SK-N-SH (cell line): ENCODE measurements at regions of chr20 and their contacts with region 1.

Region 1: DNA sequence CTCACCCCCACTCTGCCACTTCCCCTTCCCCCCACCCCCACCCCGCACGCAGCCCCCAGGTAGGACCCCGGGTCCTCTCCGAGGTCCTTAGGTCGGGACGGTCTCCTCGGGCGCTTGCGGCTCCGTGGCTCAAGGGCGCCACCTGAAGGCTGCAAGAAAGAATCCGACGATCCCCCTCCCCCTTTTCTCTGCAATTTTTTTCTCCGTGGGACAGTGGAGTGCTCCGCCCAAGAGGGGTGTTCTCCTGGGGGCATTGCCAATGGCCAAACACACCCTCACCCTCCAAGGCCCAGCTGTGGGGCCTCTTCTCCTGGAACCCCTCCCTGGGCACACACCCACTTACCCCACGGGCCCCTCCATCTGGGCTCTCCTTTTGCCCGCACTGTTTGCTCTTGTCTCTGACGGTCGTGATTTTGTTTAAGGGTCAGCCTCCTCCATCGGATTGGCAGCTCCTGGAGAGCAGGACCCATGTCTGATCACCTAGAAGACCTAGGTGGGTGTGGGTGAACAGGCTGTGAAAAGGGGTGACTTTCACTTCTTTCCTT is 1.1 kb upstream of the TMEM74B start:
- DNase-seq: peak; percentile 88
- H3K4me3 ChIP-seq: peak overlapping the region in 1 of 2 experiments; percentile 50; a peak in 1 of 4 replicates
- H3K27ac ChIP-seq: no peak overlapping the region
- H3K4me1 ChIP-seq: peaks cover 0 to 3% of the 10 kb centered on the region in 2 experiments; a peak in 1 of 4 replicates
- H3K27me3 ChIP-seq: no peaks in the 10 kb centered on the region; the same call in 1 of the 2 replicates
- CTCF ChIP-seq: peak; percentile 66
- EP300 ChIP-seq: no peak
- RAD21 ChIP-seq: peak; percentile 64

Region 2: DNA sequence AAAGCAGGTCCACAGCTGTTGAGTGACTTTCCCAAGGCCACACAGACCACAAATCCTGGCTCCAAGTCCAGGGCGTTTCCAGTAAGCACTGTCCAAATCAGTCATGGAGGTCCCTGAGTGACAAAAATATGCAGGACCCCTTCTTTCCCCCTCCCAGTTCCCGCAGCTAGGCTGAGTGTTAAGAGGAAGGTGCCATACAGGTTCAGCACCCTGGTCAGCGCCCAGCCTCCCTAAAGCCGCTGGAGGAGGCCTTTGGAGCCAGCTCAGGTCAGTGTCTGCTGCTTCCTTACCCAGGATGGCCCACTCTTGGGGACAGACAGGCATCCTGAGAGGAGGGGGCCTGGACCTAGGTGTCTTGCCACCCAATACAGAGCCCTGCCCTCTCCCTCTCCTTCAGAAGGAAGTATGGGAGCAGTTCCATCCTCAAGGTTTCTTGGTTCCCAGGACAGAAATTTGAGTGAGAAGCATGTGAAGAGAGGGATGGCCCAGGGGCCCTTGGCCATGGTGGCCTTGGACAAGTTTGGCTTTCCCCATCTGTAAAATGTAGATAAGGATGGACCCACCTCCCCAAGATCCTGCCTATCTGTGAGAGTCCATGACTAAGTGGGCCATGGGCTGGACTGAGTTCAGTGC is 14.3 kb before region 1 on chr20:
- CTCF ChIA-PET with region 1: interaction called, 20 read pairs
- POLR2A ChIA-PET with region 1: interaction called, 3 read pairs
- DNase-seq: no peak
- H3K4me3 ChIP-seq: no peak overlapping the region
- H3K27ac ChIP-seq: no peak overlapping the region
- H3K4me1 ChIP-seq: no peaks in the 10 kb centered on the region; a peak in 1 of 4 replicates
- H3K27me3 ChIP-seq: no peaks in the 10 kb centered on the region
- CTCF ChIP-seq: no peak
- EP300 ChIP-seq: no peak
- RAD21 ChIP-seq: no peak

Region 3: GRCh38 chr20:1204113-1204512 is 18.3 kb after region 1 on chr20:
- CTCF ChIA-PET with region 1: interaction called, 11 read pairs
- POLR2A ChIA-PET with region 1: no interaction called
- DNase-seq: no peak
- H3K4me3 ChIP-seq: no peak overlapping the region
- H3K27ac ChIP-seq: no peak overlapping the region
- H3K4me1 ChIP-seq: no peaks in the 10 kb centered on the region
- H3K27me3 ChIP-seq: no peaks in the 10 kb centered on the region; the same call in 1 of the 2 replicates
- CTCF ChIP-seq: no peak
- EP300 ChIP-seq: no peak
- RAD21 ChIP-seq: no peak

Region 4: GRCh38 chr20:1212607-1213396 is 26.9 kb after region 1 on chr20:
- CTCF ChIA-PET with region 1: interaction called, 33 read pairs
- POLR2A ChIA-PET with region 1: no interaction called
- DNase-seq: peak; percentile 74
- H3K4me3 ChIP-seq: no peak overlapping the region; a peak in 1 of 4 replicates
- H3K27ac ChIP-seq: no peak overlapping the region
- H3K4me1 ChIP-seq: no peaks in the 10 kb centered on the region; a peak in 1 of 4 replicates
- H3K27me3 ChIP-seq: no peaks in the 10 kb centered on the region; the same call in 1 of the 2 replicates
- CTCF ChIP-seq: peak; percentile 77
- EP300 ChIP-seq: no peak
- RAD21 ChIP-seq: peak; percentile 82

Region 5: GRCh38 chr20:1291191-1291741 is 105.4 kb after region 1 on chr20:
- CTCF ChIA-PET with region 1: no interaction called
- POLR2A ChIA-PET with region 1: no interaction called
- DNase-seq: no peak
- H3K4me3 ChIP-seq: no peak overlapping the region
- H3K27ac ChIP-seq: no peak overlapping the region
- H3K4me1 ChIP-seq: peaks cover 0 to 7% of the 10 kb centered on the region in 2 experiments; a peak in 1 of 4 replicates
- H3K27me3 ChIP-seq: no peaks in the 10 kb centered on the region
- CTCF ChIP-seq: no peak
- EP300 ChIP-seq: no peak
- RAD21 ChIP-seq: no peak

Region 6: GRCh38 chr20:1685304-1686052 is 499.6 kb after region 1 on chr20:
- CTCF ChIA-PET with region 1: no interaction called
- POLR2A ChIA-PET with region 1: no interaction called
- DNase-seq: no peak
- H3K4me3 ChIP-seq: no peak overlapping the region
- H3K27ac ChIP-seq: no peak overlapping the region
- H3K4me1 ChIP-seq: no peaks in the 10 kb centered on the region
- H3K27me3 ChIP-seq: no peaks in the 10 kb centered on the region; the same call in 1 of the 2 replicates
- CTCF ChIP-seq: no peak
- EP300 ChIP-seq: no peak
- RAD21 ChIP-seq: no peak